CD4-positive, alpha-beta memory T cell (primary cell): ENCODE measurements at regions of chr17 and their contacts with region 1.

Region 1: GRCh38 chr17:4980644-4981216 is 6.7 kb downstream of the CAMTA2 start:
- DNase-seq: peak; percentile 62 to 73 (median 67)
- H3K4me3 ChIP-seq: no peak overlapping the region
- H3K4me3 Mint-ChIP-seq: peak overlapping the region in 5 of 8 donors; percentile 8 to 65 (median 22)
- H3K27ac ChIP-seq: no peak overlapping the region
- H3K27ac Mint-ChIP-seq: peak overlapping the region; percentile 34 to 94 (median 80)
- H3K4me1 ChIP-seq: peaks cover 15% of the 10 kb centered on the region
- H3K4me1 Mint-ChIP-seq: peaks cover 17 to 36% (median 22%) of the 10 kb centered on the region in 4 donors
- H3K27me3 ChIP-seq: no peaks in the 10 kb centered on the region
- H3K27me3 Mint-ChIP-seq: no peaks in the 10 kb centered on the region

Region 2: GRCh38 chr17:4852567-4853207 is 128.0 kb before region 1 on chr17:
- CTCF ChIA-PET with region 1: no interaction called
- POLR2A ChIA-PET with region 1: no interaction called
- intact Hi-C with region 1: no loop called
- DNase-seq: peak; percentile 30 to 70 (median 43)
- H3K4me3 ChIP-seq: no peak overlapping the region
- H3K4me3 Mint-ChIP-seq: peak overlapping the region in 1 of 8 donors; percentile 2
- H3K27ac ChIP-seq: no peak overlapping the region
- H3K27ac Mint-ChIP-seq: peak overlapping the region; percentile 19 to 86 (median 68)
- H3K4me1 ChIP-seq: peaks cover 19% of the 10 kb centered on the region
- H3K4me1 Mint-ChIP-seq: peaks cover 34 to 70% (median 49%) of the 10 kb centered on the region in 4 donors
- H3K27me3 ChIP-seq: no peaks in the 10 kb centered on the region
- H3K27me3 Mint-ChIP-seq: no peaks in the 10 kb centered on the region

Region 3: GRCh38 chr17:4908301-4908700 is 72.4 kb before region 1 on chr17:
- CTCF ChIA-PET with region 1: interaction called, 26 read pairs
- POLR2A ChIA-PET with region 1: interaction called, 7 read pairs
- intact Hi-C with region 1: loop called (anchors 1 kb)
- DNase-seq: no peak
- H3K4me3 ChIP-seq: no peak overlapping the region
- H3K4me3 Mint-ChIP-seq: no peak overlapping the region
- H3K27ac ChIP-seq: peak overlapping the region; percentile 5
- H3K27ac Mint-ChIP-seq: no peak overlapping the region
- H3K4me1 ChIP-seq: peaks cover 22% of the 10 kb centered on the region
- H3K4me1 Mint-ChIP-seq: peaks cover 4 to 11% (median 6%) of the 10 kb centered on the region in 4 donors
- H3K27me3 ChIP-seq: no peaks in the 10 kb centered on the region
- H3K27me3 Mint-ChIP-seq: no peaks in the 10 kb centered on the region

Region 4: GRCh38 chr17:5019475-5019956 is 38.8 kb after region 1 on chr17:
- CTCF ChIA-PET with region 1: no interaction called
- POLR2A ChIA-PET with region 1: no interaction called
- intact Hi-C with region 1: loop called (anchors 1 kb)
- DNase-seq: peak in 4 of 5 donors; percentile 21 to 27 (median 23)
- H3K4me3 ChIP-seq: no peak overlapping the region
- H3K4me3 Mint-ChIP-seq: no peak overlapping the region
- H3K27ac ChIP-seq: no peak overlapping the region
- H3K27ac Mint-ChIP-seq: peak overlapping the region in 6 of 7 donors; percentile 30 to 84 (median 64)
- H3K4me1 ChIP-seq: no peaks in the 10 kb centered on the region
- H3K4me1 Mint-ChIP-seq: peaks cover 0 to 4% (median under 1%) of the 10 kb centered on the region in 4 donors
- H3K27me3 ChIP-seq: no peaks in the 10 kb centered on the region
- H3K27me3 Mint-ChIP-seq: no peaks in the 10 kb centered on the region

Region 5: DNA sequence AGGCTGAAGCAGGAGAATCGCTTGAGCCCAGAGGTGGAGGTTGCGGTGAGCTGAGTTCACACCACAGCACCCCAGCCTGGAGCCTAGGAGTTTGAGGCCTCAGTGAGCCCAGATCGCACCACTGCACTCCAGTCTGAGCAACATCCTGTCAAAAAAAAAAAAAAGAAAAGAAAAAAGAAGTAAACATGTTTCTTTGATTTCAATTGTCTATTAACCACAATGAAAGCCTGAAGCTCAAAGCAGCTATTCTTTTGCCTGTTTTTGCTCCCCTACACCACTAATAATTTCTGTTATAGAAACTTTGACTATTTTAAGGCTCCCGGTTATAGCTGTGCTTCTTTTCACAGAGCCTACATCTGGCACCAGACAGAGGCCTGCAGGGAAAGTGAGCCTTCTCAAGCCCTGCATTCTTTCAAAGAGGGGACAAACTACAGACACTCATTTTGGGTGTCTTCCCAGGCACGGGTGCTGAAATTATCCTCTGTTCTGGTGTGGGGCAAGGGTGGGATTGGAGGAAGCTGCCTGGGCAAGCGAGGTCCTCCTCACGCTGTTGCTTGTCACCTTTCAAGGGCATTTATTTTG is 68.7 kb after region 1 on chr17:
- CTCF ChIA-PET with region 1: interaction called, 11 read pairs
- POLR2A ChIA-PET with region 1: interaction called, 7 read pairs
- intact Hi-C with region 1: no loop called
- DNase-seq: peak; percentile 79 to 89 (median 85)
- H3K4me3 ChIP-seq: no peak overlapping the region
- H3K4me3 Mint-ChIP-seq: peak overlapping the region in 7 of 8 donors; percentile 61 to 89 (median 74)
- H3K27ac ChIP-seq: peak overlapping the region; percentile 42
- H3K27ac Mint-ChIP-seq: peak overlapping the region; percentile 93 to 98 (median 95)
- H3K4me1 ChIP-seq: peaks cover 60% of the 10 kb centered on the region
- H3K4me1 Mint-ChIP-seq: peaks cover 32 to 60% (median 47%) of the 10 kb centered on the region in 4 donors
- H3K27me3 ChIP-seq: no peaks in the 10 kb centered on the region
- H3K27me3 Mint-ChIP-seq: no peaks in the 10 kb centered on the region

Region 6: GRCh38 chr17:5065227-5065744 is 84.6 kb after region 1 on chr17:
- CTCF ChIA-PET with region 1: interaction called, 72 read pairs
- POLR2A ChIA-PET with region 1: interaction called, 3 read pairs
- intact Hi-C with region 1: loop called (anchors 1 kb)
- DNase-seq: no peak
- H3K4me3 ChIP-seq: no peak overlapping the region
- H3K4me3 Mint-ChIP-seq: no peak overlapping the region
- H3K27ac ChIP-seq: no peak overlapping the region
- H3K27ac Mint-ChIP-seq: no peak overlapping the region
- H3K4me1 ChIP-seq: no peaks in the 10 kb centered on the region
- H3K4me1 Mint-ChIP-seq: peaks cover 3 to 10% (median 7%) of the 10 kb centered on the region in 4 donors
- H3K27me3 ChIP-seq: no peaks in the 10 kb centered on the region
- H3K27me3 Mint-ChIP-seq: no peaks in the 10 kb centered on the region

Region 7: DNA sequence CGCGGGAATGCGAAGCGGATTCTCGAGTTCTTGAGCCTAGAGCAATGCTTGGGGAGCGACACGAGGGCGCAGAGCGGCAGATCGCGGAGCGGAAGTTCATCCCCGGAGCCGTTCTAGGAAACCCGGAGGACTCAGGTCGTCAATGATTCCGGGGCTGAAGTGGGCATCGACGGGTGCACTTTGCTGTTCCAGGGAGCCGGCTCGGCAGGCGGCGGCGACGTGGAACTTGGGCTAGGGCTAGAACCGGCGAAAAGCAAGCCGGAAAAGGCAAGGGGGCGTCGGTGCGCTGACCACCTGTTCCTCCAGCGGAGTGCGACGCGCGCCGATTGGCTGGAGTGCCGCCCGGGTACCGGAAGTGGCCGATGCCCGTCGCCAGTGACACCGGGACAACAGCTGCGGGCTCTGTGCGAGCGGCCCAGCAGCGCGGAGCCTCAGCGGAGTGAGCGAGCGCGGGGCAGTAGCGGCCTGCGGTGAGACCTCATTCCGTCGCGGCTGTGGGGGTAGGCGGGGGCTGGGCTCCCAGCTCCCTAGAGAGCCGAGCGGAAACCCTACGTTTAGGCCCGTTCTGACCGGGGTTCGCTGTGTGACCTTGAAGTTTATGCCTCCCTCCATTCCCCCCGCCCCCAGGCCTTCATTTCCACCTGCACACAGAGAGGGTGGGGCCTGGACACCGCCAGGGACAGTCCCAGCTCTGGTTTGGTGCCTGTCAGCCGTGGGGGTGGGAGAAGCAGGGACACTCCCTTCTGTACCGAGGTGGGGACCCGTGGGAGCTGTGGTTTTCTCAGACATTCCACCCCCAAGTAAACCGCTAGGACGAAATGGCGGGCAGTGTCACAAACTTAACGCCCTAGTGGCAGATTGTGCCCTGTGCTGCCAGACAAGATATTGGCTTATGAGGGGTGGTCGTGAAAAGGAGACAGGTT is 97.6 kb after region 1 on chr17 and contains the start of gene ZFP3:
- CTCF ChIA-PET with region 1: no interaction called
- POLR2A ChIA-PET with region 1: no interaction called
- intact Hi-C with region 1: no loop called
- DNase-seq: peak; percentile 65 to 84 (median 72)
- H3K4me3 ChIP-seq: peak within 1 kb of the TSS; percentile 76 to 87
- H3K4me3 Mint-ChIP-seq: peak within 1 kb of the TSS; percentile 89 to 98 (median 94)
- H3K27ac ChIP-seq: peak within 1 kb of the TSS; percentile 64
- H3K27ac Mint-ChIP-seq: peak within 1 kb of the TSS; percentile 30 to 98 (median 93)
- H3K4me1 ChIP-seq: peaks cover 16% of the 10 kb centered on the region
- H3K4me1 Mint-ChIP-seq: peaks cover 19 to 34% (median 30%) of the 10 kb centered on the region in 4 donors
- H3K27me3 ChIP-seq: no peaks in the 10 kb centered on the region
- H3K27me3 Mint-ChIP-seq: no peaks in the 10 kb centered on the region
- total RNA-seq, gene ZFP3: 12.0 to 13.0 TPM